HepG2 (cell line): ENCODE measurements at regions of chr11 and their contacts with region 1.

Region 1: GRCh38 chr11:105469931-105470330 is 139.9 kb upstream of the GRIA4 start:
- DNase-seq: no peak
- ATAC-seq: no peak
- H3K4me3 ChIP-seq: no peak overlapping the region
- H3K27ac ChIP-seq: no peak overlapping the region
- H3K4me1 ChIP-seq: no peaks in the 10 kb centered on the region
- H3K27me3 ChIP-seq: no peaks in the 10 kb centered on the region
- CTCF ChIP-seq: no peak
- EP300 ChIP-seq: no peak
- POLR2A ChIP-seq: no peak
- RAD21 ChIP-seq: no peak

Region 2: DNA sequence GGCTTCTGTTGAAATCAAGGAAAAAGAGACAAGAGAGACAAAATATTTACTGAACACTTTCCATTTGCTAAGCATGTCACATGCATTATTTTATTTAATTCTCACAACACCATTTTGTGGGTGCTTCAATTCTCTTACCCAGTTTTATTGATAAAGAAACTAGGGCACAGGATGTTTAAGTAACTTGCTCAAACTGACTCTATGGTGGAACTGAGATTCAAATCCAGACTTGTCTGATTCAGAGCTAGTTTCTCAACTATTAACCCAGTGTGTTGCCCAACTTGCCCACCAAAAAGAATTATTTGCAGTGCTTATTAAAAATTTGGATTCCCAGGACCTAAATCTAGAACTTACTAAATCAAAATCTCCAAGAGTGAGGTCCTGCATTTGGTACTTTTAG is 573.6 kb after region 1 on chr11:
- CTCF ChIA-PET with region 1: no interaction called
- POLR2A ChIA-PET with region 1: no interaction called
- in situ Hi-C with region 1: no loop called
- intact Hi-C with region 1: loop called (anchors 5 kb)
- DNase-seq: no peak
- ATAC-seq: no peak
- H3K4me3 ChIP-seq: no peak overlapping the region
- H3K27ac ChIP-seq: no peak overlapping the region
- H3K4me1 ChIP-seq: no peaks in the 10 kb centered on the region
- H3K27me3 ChIP-seq: no peaks in the 10 kb centered on the region
- CTCF ChIP-seq: no peak
- EP300 ChIP-seq: no peak
- POLR2A ChIP-seq: no peak
- RAD21 ChIP-seq: no peak